ENCODE measurements at regions of chr12 and their contacts with region 1.

Region 1: GRCh38 chr12:9361879-9362326 is 153.7 kb upstream of the PZP start:
- DNase-seq: no peak
- H3K4me3 Mint-ChIP-seq: no peak overlapping the region
- H3K27ac Mint-ChIP-seq: no peak overlapping the region
- H3K4me1 Mint-ChIP-seq: peaks cover 40% of the 10 kb centered on the region
- H3K27me3 Mint-ChIP-seq: peaks cover 13% of the 10 kb centered on the region

Region 2: GRCh38 chr12:9449181-9449580 is 87.3 kb after region 1 on chr12:
- CTCF ChIA-PET with region 1: no interaction called
- POLR2A ChIA-PET with region 1: interaction called, 14 read pairs
- DNase-seq: no peak
- H3K4me3 Mint-ChIP-seq: peak overlapping the region; percentile 90
- H3K27ac Mint-ChIP-seq: peak overlapping the region; percentile 93
- H3K4me1 Mint-ChIP-seq: peaks cover 26% of the 10 kb centered on the region
- H3K27me3 Mint-ChIP-seq: no peaks in the 10 kb centered on the region